GM13976 (cell line): ENCODE measurements at regions of chr13 and their contacts with region 1.

Region 1: DNA sequence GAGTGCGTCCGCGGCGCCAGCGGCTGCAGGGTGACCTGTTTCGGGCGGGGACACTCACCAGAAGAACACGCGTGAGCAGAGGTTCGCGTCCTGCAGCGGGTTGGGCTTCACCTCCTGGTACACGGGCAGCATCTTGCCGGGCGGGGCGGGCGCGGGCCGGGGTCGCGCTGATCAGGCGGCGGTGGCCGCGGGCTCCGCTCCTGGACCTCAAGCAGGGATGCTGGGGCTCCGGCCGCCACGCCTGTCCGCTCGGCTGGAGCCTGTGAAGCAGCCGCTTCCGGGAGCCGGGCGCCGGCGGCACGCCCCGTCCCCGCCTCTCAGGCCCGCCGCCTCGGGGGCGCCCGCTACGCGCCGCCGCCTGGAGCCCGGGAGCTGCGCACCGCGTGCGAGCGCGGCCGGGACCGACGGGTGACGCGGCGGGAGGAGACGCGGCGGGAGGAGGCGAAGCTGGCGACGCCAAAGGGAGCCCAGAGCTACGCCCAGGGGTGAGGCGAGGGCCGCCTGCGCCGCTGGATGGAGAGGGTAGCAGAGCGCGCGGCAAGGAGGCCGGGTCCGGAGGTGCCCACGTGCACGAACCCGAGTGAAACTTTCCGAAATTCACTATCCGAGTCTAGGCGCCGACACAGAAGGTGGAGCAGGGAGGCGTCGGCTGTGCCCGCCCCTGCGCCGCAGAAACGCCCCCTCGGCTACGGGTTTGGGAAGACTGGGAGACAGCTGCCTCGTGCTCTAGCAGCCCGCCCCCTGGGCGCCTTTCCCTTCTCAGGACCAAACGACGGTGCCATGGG is at the start of gene ABCC4:
- DNase-seq: peak; percentile 92
- CTCF ChIP-seq: no peak

Region 2: DNA sequence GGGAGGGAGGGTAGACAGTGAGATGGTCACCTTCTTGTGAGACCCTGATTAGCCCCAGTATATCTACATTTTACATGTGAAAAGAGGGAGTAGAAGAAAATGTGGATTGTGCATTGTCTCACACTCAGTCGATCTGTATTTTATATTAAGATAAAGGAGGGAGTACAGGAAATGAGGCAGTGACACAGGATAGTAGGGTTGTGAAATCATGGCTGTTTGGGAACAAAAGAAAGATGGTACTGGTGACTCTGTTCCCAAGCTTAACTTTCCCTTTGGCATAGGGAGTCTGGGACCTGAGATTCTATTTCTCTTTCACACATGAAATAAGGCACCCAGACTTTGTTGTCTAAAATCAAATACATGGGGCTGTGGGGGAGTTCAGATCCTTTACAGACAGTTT is 194.8 kb before region 1 on chr13:
- in situ Hi-C with region 1: no loop called
- DNase-seq: no peak
- CTCF ChIP-seq: no peak

Region 3: DNA sequence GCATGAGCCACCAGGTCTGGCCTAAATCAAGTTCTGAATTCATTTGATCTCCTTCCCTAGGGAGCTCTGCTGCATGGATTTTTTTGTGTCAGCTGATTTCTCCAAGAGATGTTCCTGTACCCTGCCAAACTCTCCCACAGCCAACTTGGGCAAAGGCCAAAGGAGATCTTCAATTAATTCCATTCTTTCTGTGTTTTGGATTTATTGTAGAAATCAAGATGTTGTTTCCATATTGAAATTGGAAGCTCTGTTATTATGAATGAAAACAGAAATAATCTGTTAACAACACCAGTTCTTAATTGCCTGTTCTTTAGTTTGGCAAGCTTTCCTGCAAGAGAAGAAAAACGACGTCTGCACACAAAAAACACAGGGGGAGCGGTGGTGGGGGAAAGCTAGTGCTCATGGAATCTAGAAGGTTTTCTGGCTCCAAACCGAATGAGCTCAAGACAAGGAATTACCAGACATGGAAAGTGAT is 86.4 kb after region 1 on chr13:
- in situ Hi-C with region 1: loop called (anchors 10 kb)
- DNase-seq: no peak
- CTCF ChIP-seq: no peak

Region 4: GRCh38 chr13:95902741-95903140 is 601.4 kb after region 1 on chr13:
- in situ Hi-C with region 1: no loop called
- DNase-seq: no peak
- CTCF ChIP-seq: no peak